ENCODE measurements at regions of chr9 and their contacts with region 1.

Region 1: GRCh38 chr9:121213136-121213806 is 11.6 kb upstream of the RAB14 start:
- DNase-seq: peak; percentile 92
- H3K4me3 ChIP-seq: no peak overlapping the region
- H3K27ac ChIP-seq: no peak overlapping the region
- H3K4me1 ChIP-seq: no peaks in the 10 kb centered on the region
- H3K27me3 ChIP-seq: no peaks in the 10 kb centered on the region
- CTCF ChIP-seq: peak; percentile 83 to 93 (median 91)
- POLR2A ChIP-seq: no peak

Region 2: DNA sequence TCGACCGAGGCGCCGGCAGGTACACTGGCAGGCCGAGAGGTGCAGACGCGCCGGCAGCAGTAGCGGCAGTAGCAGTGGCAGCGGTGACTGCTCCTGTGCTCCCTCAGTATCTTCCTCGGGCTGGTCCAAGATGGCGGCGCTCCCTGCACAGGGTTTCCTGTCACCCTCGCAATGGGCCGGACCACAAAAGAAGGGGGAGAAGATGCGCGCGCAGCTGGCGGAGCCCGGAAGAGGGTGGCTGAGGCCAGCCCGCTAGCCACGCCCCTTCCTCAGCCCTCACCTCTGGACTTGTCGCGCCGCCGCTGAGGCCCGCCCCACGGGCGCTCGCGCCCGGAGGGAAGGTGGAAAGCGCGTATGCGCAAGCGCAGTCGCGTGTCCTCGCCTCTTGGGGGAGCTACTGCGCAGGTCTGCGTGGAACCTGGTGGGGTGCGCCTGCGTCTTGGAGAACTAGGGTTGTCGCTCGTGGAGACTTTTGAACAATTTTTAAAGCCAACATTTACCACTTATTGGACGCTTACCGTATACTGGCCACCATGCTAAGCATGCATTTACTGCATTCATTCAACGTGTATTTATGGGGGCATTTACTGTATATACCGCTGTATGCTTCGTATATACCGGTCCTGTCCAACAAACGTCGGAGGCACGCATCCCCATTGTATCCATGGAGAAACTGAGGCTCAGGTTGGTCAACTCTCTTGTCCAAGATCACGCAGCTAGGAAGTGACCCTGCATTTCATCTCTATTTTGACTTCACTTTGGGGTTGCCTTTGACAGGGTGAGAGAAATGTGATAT is 11.3 kb before region 1 on chr9 and contains the start of gene RAB14:
- intact Hi-C with region 1: no loop called
- DNase-seq: peak; percentile 100
- H3K4me3 ChIP-seq: peak within 1 kb of the TSS; percentile 95 to 97
- H3K27ac ChIP-seq: peak within 1 kb of the TSS; percentile 90 to 96
- H3K4me1 ChIP-seq: peaks cover 14% of the 10 kb centered on the region
- H3K27me3 ChIP-seq: no peaks in the 10 kb centered on the region
- CTCF ChIP-seq: peak; percentile 34 to 64 (median 59)
- POLR2A ChIP-seq: peak; percentile 29
- total RNA-seq, gene RAB14: 44.6 to 51.1 TPM

Region 3: DNA sequence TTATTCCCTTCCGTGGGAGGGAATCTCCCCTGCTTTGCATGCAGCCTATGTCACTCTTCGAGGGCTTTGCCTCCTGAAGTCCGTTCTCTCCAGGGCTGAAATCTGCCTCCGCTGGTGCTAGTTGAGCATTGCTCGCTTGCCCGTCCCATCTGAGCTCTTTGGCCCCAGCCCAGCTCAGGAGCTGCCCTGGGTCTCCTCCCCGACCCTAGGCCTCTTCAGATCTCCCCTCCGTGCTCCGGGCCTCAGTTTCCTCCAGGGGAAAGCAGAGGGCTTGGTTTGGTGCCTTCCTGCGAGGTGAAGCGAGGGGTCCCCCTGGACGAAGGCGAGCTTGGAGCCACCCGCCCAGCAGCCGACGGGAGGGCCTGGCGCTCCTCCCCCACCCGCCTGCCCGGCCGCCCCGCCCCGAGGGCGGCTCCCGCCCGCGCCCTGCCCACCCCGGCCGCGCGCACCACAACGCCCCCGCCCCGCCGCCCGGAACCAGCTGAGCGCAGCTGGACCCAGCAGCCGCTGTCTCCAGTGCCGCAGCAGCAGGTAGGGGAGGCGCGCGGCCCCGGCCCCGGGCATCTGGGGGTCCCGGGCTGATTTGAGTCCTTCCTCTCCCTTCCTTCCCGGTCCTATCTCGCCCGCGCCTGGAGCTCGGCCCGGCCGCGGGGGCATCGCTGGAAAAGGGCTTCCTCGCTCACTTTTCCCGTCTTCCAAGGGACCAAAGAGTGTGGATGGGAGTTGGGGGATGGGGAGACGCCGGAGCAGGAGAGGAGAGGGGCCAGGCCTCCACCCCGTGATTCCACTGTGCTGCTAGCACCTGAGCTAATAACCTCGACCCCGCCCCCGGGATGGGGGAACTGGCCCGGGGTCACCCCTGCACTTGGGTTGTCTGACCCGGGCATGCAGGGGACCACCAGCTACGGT is 54.7 kb after region 1 on chr9 and contains the start of gene GSN:
- intact Hi-C with region 1: loop called (anchors 10 kb)
- DNase-seq: peak; percentile 88
- H3K4me3 ChIP-seq: peak within 1 kb of the TSS; percentile 81 to 93
- H3K27ac ChIP-seq: peak within 1 kb of the TSS; percentile 71 to 86
- H3K4me1 ChIP-seq: peaks cover 40% of the 10 kb centered on the region
- H3K27me3 ChIP-seq: no peaks in the 10 kb centered on the region
- CTCF ChIP-seq: peak in 1 of 3 experiments; percentile 1
- POLR2A ChIP-seq: peak; percentile 37
- total RNA-seq, gene GSN: 206 to 356 TPM

Region 4: GRCh38 chr9:121317742-121318489 is 104.6 kb after region 1 on chr9:
- intact Hi-C with region 1: loop called (anchors 10 kb)
- DNase-seq: peak; percentile 82
- H3K4me3 ChIP-seq: no peak overlapping the region
- H3K27ac ChIP-seq: peak overlapping the region; percentile 4 to 62
- H3K4me1 ChIP-seq: peaks cover 10% of the 10 kb centered on the region
- H3K27me3 ChIP-seq: no peaks in the 10 kb centered on the region
- CTCF ChIP-seq: no peak
- POLR2A ChIP-seq: no peak

Region 5: GRCh38 chr9:121399883-121400607 is 186.8 kb after region 1 on chr9:
- intact Hi-C with region 1: loop called (anchors 10 kb)
- DNase-seq: no peak
- H3K4me3 ChIP-seq: no peak overlapping the region
- H3K27ac ChIP-seq: no peak overlapping the region
- H3K4me1 ChIP-seq: no peaks in the 10 kb centered on the region
- H3K27me3 ChIP-seq: no peaks in the 10 kb centered on the region
- CTCF ChIP-seq: peak; percentile 67 to 78 (median 78)
- POLR2A ChIP-seq: no peak

Measured in testis (tissue), 5 donors.